Activated CD4-positive, alpha-beta memory T cell treated with anti-CD3 and anti-CD28 coated beads, Interleukin-2, amount 10 ng/mL, durations not matched to agents 7 days and 5 days (primary cell): ENCODE measurements at regions of chr5 and their contacts with region 1.

Region 1: DNA sequence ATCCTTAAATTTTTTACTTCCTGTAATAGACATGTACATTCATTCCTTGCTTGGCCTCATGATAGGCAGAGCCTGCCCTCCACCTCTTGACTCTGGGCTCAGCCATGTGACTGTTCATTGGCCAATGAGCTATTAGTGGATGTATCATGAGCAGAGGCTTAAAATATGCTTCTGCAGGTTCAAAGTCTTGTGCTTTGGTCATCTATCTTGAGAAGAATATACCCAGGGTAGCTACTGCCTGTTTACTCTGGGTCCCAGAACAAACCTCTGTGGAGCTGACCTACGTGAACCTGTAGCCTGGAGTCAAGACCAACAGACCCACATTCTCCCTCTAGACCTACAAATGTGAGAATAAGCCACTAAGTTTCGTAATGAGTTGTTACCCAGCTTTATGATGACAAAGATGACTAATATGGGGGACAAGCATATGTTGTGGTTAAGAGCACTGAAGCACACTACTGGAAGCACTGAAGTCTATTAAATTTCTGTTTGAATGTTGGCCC is 244.4 kb downstream of the MAST4 start:
- DNase-seq: peak; percentile 55
- H3K4me3 Mint-ChIP-seq: peak overlapping the region; percentile 31
- H3K27ac Mint-ChIP-seq: peak overlapping the region; percentile 92
- H3K4me1 Mint-ChIP-seq: peaks cover 64% of the 10 kb centered on the region
- H3K27me3 Mint-ChIP-seq: peaks cover 3% of the 10 kb centered on the region

Region 2: GRCh38 chr5:66814146-66814991 is 26.2 kb before region 1 on chr5:
- CTCF ChIA-PET with region 1: interaction called, 20 read pairs
- POLR2A ChIA-PET with region 1: interaction called, 3 read pairs
- DNase-seq: peak; percentile 60
- H3K4me3 Mint-ChIP-seq: no peak overlapping the region
- H3K27ac Mint-ChIP-seq: no peak overlapping the region
- H3K4me1 Mint-ChIP-seq: peaks cover 21% of the 10 kb centered on the region
- H3K27me3 Mint-ChIP-seq: peaks cover 3% of the 10 kb centered on the region

Region 3: GRCh38 chr5:66821688-66822429 is 18.7 kb before region 1 on chr5:
- CTCF ChIA-PET with region 1: interaction called, 20 read pairs
- POLR2A ChIA-PET with region 1: interaction called, 36 read pairs
- DNase-seq: peak; percentile 71
- H3K4me3 Mint-ChIP-seq: peak overlapping the region; percentile 63
- H3K27ac Mint-ChIP-seq: peak overlapping the region; percentile 94
- H3K4me1 Mint-ChIP-seq: peaks cover 56% of the 10 kb centered on the region
- H3K27me3 Mint-ChIP-seq: no peaks in the 10 kb centered on the region

Region 4: GRCh38 chr5:66828548-66829357 is 11.8 kb before region 1 on chr5:
- CTCF ChIA-PET with region 1: interaction called, 78 read pairs
- POLR2A ChIA-PET with region 1: interaction called, 169 read pairs
- DNase-seq: peak; percentile 82
- H3K4me3 Mint-ChIP-seq: peak overlapping the region; percentile 86
- H3K27ac Mint-ChIP-seq: peak overlapping the region; percentile 84
- H3K4me1 Mint-ChIP-seq: peaks cover 66% of the 10 kb centered on the region
- H3K27me3 Mint-ChIP-seq: no peaks in the 10 kb centered on the region